H1 (cell line): ENCODE measurements at regions of chr7 and their contacts with region 1.

Region 1: GRCh38 chr7:76359111-76359978 is 554 bp upstream of the YWHAG start:
- DNase-seq: peak; percentile 93
- H3K4me3 ChIP-seq: peak overlapping the region; percentile 89 to 99 (median 92)
- H3K27ac ChIP-seq: peak overlapping the region; percentile 99
- H3K4me1 ChIP-seq: peaks cover 4 to 11% (median 6%) of the 10 kb centered on the region in 4 experiments
- H3K27me3 ChIP-seq: no peaks in the 10 kb centered on the region
- CTCF ChIP-seq: peak; percentile 51 to 63 (median 60)
- EP300 ChIP-seq: no peak
- POLR2A ChIP-seq: peak; percentile 26 to 34
- RAD21 ChIP-seq: peak; percentile 44 to 49; a peak in 3 of 4 replicates

Region 2: DNA sequence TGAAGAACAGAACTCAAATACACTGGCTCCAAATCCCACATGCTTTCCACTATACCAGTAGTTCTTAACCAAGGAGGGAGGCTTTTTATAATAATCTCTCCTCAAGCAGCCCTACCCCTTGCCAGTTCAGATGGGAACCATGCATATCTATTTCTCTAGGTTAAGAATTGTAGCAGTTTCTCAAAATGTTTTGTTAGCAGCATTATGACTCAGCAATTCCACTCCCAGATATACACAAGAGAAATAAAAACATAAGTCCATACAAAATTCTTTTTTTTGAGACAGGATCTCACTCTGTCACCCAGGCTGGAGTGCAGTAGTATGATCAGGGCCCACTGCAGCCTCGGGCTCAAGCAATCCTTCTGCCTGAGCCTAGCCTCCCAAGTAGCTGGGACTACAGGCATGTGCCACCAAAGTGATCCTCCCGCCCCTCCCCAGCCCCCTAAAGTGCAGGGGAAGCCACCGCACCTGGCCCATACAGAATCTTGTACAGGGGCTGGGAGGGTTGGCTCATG is 18.7 kb before region 1 on chr7:
- CTCF ChIA-PET with region 1: interaction called, 5 read pairs
- POLR2A ChIA-PET with region 1: interaction called, 249 read pairs
- DNase-seq: no peak
- H3K4me3 ChIP-seq: no peak overlapping the region
- H3K27ac ChIP-seq: no peak overlapping the region
- H3K4me1 ChIP-seq: peaks cover 0 to 4% (median 1%) of the 10 kb centered on the region in 4 experiments; a peak in 1 of 7 replicates
- H3K27me3 ChIP-seq: no peaks in the 10 kb centered on the region
- CTCF ChIP-seq: no peak
- EP300 ChIP-seq: no peak
- POLR2A ChIP-seq: no peak
- RAD21 ChIP-seq: no peak